Endothelial cell of umbilical vein (primary cell): ENCODE measurements at regions of chr4 and their contacts with region 1.

Region 1: DNA sequence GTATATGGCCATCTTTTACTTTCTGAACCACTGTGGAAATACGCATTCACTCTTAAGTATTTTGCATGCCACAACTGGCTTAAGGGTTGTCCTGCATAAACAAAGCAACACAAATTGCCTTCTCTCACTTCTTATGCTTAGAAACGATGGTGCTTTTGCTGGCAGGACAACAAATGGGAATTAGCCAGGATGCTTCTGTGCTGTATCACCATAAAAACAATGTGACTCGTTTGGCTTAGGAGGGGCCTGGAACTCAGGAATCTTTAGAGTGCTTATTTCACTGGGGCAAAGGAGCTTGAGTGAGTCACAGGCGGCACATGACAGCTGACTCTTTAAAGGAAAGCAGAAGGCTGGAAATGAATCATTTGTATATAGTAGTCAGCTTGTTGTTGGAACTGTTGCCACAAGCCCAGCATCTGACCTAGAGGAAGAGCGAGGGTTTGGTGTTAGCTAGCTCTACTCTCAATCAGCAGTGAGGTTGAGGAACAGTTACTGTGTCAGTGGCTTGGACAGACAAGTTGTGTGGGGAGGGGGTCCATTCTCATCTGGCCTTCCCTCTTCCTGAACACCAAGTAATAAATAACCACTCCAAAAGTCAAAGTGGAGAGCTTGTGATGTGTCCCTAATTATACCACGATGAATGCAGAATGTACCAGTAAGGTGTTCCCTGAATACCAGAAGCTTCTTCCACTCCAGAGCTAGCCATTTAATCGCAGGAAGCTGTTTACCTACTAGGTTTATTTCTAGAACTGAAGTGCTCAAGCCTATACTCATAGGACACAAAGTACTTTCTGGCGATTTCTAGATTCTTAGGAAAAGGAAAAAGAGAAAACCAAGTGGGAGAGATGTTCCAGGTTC is 293.1 kb downstream of the CAMK2D start:
- DNase-seq: peak; percentile 100
- H3K4me3 ChIP-seq: peak overlapping the region in 1 of 3 experiments; percentile 7
- H3K27ac ChIP-seq: peak overlapping the region; percentile 96
- H3K4me1 ChIP-seq: peaks cover 31% of the 10 kb centered on the region
- H3K27me3 ChIP-seq: no peaks in the 10 kb centered on the region
- CTCF ChIP-seq: no peak
- POLR2A ChIP-seq: peak; percentile 40

Region 2: GRCh38 chr4:113383111-113383785 is 85.1 kb before region 1 on chr4:
- CTCF ChIA-PET with region 1: no interaction called
- POLR2A ChIA-PET with region 1: no interaction called
- dilution Hi-C with region 1: no loop called
- intact Hi-C with region 1: loop called (anchors 1 kb)
- DNase-seq: peak; percentile 82
- H3K4me3 ChIP-seq: no peak overlapping the region
- H3K27ac ChIP-seq: peak overlapping the region; percentile 57
- H3K4me1 ChIP-seq: peaks cover 29% of the 10 kb centered on the region
- H3K27me3 ChIP-seq: no peaks in the 10 kb centered on the region
- CTCF ChIP-seq: no peak
- POLR2A ChIP-seq: no peak

Region 3: DNA sequence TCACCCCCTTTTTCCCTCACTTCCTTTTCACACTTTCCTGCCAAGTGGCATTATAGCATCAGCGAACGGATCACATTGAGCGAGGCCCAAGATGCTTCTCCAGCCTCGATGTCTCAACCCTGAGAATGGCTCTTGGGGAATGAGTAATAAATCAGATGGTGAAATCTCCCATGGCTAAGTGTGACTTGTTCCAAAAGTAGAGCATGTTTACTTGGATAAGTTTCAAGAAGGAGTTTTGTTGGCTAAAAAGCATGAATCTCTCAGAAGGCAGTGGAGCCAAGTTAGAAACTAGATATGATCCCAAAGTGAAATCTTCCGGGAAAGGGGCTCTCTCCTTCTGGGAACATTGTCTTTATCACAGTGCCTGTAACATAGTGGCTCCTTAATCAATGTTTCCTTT is 23.1 kb before region 1 on chr4:
- CTCF ChIA-PET with region 1: interaction called, 8 read pairs
- POLR2A ChIA-PET with region 1: interaction called, 4 read pairs
- dilution Hi-C with region 1: no loop called
- intact Hi-C with region 1: loop called (anchors 1 kb)
- DNase-seq: peak; percentile 83
- H3K4me3 ChIP-seq: no peak overlapping the region
- H3K27ac ChIP-seq: peak overlapping the region; percentile 47
- H3K4me1 ChIP-seq: peaks cover 22% of the 10 kb centered on the region
- H3K27me3 ChIP-seq: no peaks in the 10 kb centered on the region
- CTCF ChIP-seq: no peak
- POLR2A ChIP-seq: no peak

Region 4: GRCh38 chr4:113547487-113548042 is 79.2 kb after region 1 on chr4:
- CTCF ChIA-PET with region 1: interaction called, 11 read pairs
- POLR2A ChIA-PET with region 1: no interaction called
- dilution Hi-C with region 1: no loop called
- intact Hi-C with region 1: loop called (anchors 5 kb)
- DNase-seq: peak; percentile 96
- H3K4me3 ChIP-seq: no peak overlapping the region
- H3K27ac ChIP-seq: peak overlapping the region; percentile 4
- H3K4me1 ChIP-seq: peaks cover 3% of the 10 kb centered on the region
- H3K27me3 ChIP-seq: no peaks in the 10 kb centered on the region
- CTCF ChIP-seq: peak; percentile 92 to 98
- POLR2A ChIP-seq: no peak

Region 5: GRCh38 chr4:113979148-113979904 is 510.9 kb after region 1 on chr4 and contains the start of gene ARSJ:
- CTCF ChIA-PET with region 1: no interaction called
- POLR2A ChIA-PET with region 1: no interaction called
- dilution Hi-C with region 1: no loop called
- intact Hi-C with region 1: loop called (anchors 5 kb)
- DNase-seq: peak; percentile 82
- H3K4me3 ChIP-seq: peak within 1 kb of the TSS; percentile 92 to 98 (median 97)
- H3K27ac ChIP-seq: peak within 1 kb of the TSS; percentile 92
- H3K4me1 ChIP-seq: peaks cover 12% of the 10 kb centered on the region
- H3K27me3 ChIP-seq: no peaks in the 10 kb centered on the region
- CTCF ChIP-seq: peak in 1 of 2 donors; percentile 3
- POLR2A ChIP-seq: peak; percentile 86
- total RNA-seq, gene ARSJ: 44.0 and 50.0 TPM in 2 replicates